ENCODE measurements at regions of chr6 and their contacts with region 1.

Region 1: DNA sequence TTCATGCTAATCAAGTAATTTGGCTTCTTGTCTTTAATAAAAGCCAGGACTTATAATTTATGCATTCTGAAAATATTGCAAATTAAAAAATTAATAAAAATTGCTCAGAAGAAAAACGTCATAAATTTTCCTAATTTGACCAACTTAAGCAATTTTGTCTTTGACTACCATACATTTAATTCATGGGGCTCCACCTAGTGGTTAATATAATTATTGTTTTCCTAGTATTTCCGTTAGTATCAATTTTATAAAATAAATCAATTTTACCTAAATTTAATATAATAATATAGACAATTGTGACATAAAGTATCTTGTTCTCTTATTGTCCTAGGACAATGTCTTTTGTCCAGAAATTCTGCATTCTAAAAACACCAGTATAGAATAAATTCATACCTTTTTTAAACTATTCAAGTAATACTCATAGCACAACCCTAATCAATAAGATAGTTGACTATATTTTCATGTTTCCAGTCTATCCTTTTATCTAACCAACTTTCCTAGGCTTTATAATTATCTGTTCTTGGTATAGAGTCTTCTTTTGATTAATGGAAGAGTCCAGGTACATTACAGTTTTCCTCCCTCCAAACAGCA is 319.9 kb downstream of the TRDN start:
- DNase-seq: no peak
- ATAC-seq: no peak
- H3K4me3 ChIP-seq: no peak overlapping the region
- H3K27ac ChIP-seq: no peak overlapping the region
- H3K4me1 ChIP-seq: no peaks in the 10 kb centered on the region
- H3K27me3 ChIP-seq: no peaks in the 10 kb centered on the region
- CTCF ChIP-seq: peak in 1 of 3 experiments; percentile 26; a peak in 3 of 6 replicates
- EP300 ChIP-seq: no peak
- POLR2A ChIP-seq: no peak
- RAD21 ChIP-seq: peak; percentile 50; the same call in 1 of the 2 replicates

Region 2: GRCh38 chr6:122947355-122947754 is 369.5 kb before region 1 on chr6:
- CTCF ChIA-PET with region 1: interaction called, 9 read pairs
- POLR2A ChIA-PET with region 1: no interaction called
- RAD21 ChIA-PET with region 1: interaction called, 3 read pairs
- SMC1A ChIA-PET with region 1: no interaction called
- in situ Hi-C with region 1: no loop called
- intact Hi-C with region 1: loop called (anchors 5 kb)
- DNase-seq: no peak
- ATAC-seq: peak; percentile 57; the same call in 2 of the 3 replicates
- H3K4me3 ChIP-seq: no peak overlapping the region
- H3K27ac ChIP-seq: no peak overlapping the region
- H3K4me1 ChIP-seq: no peaks in the 10 kb centered on the region
- H3K27me3 ChIP-seq: no peaks in the 10 kb centered on the region
- CTCF ChIP-seq: peak; percentile 17 to 35 (median 35); a peak in 3 of 6 replicates
- EP300 ChIP-seq: no peak
- POLR2A ChIP-seq: no peak
- RAD21 ChIP-seq: no peak

Region 3: DNA sequence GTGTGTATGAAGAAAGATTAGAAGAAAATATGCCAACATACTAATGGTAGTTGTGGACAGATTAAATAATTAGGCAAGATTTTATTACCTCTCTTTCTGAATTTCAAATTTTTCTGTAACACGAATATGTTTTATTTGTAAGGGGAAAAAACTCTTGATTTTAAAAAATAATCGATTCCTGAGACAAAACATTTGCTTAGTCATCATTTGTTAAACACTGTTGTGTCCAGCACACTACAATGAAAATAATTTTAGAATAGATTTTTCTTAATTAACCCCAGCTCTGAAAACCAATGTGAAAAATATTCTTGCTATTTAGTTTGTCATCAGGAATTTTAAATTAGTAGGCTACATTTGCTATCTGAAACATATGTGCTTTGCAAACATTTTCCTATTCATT is 66.9 kb after region 1 on chr6:
- CTCF ChIA-PET with region 1: no interaction called
- POLR2A ChIA-PET with region 1: no interaction called
- RAD21 ChIA-PET with region 1: no interaction called
- SMC1A ChIA-PET with region 1: no interaction called
- in situ Hi-C with region 1: no loop called
- intact Hi-C with region 1: no loop called
- DNase-seq: no peak
- ATAC-seq: no peak
- H3K4me3 ChIP-seq: no peak overlapping the region
- H3K27ac ChIP-seq: no peak overlapping the region
- H3K4me1 ChIP-seq: no peaks in the 10 kb centered on the region
- H3K27me3 ChIP-seq: no peaks in the 10 kb centered on the region
- CTCF ChIP-seq: no peak
- EP300 ChIP-seq: no peak
- POLR2A ChIP-seq: no peak
- RAD21 ChIP-seq: no peak